ENCODE measurements at regions of chr2 and their contacts with region 1.

Region 1: DNA sequence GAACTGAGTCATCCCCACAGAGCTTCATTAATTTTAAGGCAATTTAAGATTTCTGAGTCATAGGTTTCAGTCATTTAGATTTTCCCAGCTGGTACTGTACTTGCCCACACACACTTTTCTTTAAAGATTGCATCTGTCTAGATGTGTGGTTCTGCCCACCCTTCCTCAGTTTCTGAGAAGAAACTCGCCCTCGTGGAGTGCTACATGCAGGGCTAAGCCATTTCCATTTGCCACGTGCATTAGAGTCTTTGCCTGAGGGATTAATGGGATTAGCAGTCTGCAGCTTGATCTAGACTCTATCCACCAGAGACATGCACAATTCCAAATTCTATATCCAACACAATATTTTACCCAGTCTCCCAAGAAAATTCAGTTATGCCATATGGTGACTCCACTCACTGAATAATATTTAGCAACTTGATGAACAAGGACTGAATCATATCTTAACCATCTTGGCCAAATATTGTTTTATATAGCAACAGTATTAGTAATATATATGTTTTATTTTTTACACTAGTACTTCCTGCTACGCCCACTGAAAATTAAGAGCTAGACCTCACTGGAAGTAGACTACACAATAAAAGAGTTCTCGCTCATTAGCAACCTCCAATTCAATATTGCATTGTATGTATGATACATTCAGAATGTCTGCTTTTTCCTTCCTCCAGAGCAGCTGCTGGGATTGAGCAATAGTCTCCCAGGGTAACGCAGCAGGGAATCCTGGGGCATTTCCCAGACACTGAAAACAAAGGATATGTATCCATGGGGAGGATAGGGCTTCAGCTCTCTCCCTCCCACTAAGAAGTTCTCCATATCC is 14.2 kb upstream of the TRIB2 start:
- DNase-seq: no peak
- H3K4me3 ChIP-seq: no peak overlapping the region
- H3K27ac ChIP-seq: no peak overlapping the region
- H3K4me1 ChIP-seq: no peaks in the 10 kb centered on the region; a peak in 2 of 7 replicates
- H3K27me3 ChIP-seq: no peaks in the 10 kb centered on the region
- CTCF ChIP-seq: no peak
- EP300 ChIP-seq: no peak
- POLR2A ChIP-seq: no peak
- RAD21 ChIP-seq: no peak

Region 2: DNA sequence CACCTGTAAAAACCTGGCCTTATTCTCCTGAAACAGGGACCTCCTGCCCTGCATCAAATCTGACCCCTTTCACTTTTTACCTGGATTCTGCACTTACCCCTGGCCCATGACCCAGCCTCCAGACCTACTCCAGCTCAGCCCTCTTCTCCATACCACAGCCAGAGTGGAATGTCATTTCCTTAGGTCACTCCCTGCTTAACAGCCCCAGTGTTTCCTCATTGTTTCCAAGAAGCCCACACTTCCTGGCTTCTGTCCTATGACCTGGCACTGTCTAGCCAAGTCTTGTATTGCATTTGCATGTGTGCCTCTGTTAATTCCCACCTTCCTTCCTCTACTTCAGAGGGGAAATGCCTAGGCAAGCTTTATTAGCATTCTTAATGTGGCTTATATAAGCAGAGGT is 37.2 kb before region 1 on chr2:
- CTCF ChIA-PET with region 1: no interaction called
- POLR2A ChIA-PET with region 1: no interaction called
- DNase-seq: no peak
- H3K4me3 ChIP-seq: no peak overlapping the region
- H3K27ac ChIP-seq: no peak overlapping the region
- H3K4me1 ChIP-seq: no peaks in the 10 kb centered on the region
- H3K27me3 ChIP-seq: peaks cover 0 to 1% (median 0%) of the 10 kb centered on the region in 4 experiments; a peak in 1 of 7 replicates
- CTCF ChIP-seq: no peak
- EP300 ChIP-seq: no peak
- POLR2A ChIP-seq: no peak
- RAD21 ChIP-seq: no peak

Region 3: GRCh38 chr2:12716282-12717190 is 14.0 kb after region 1 on chr2 and contains the start of gene TRIB2:
- CTCF ChIA-PET with region 1: interaction called, 11 read pairs
- POLR2A ChIA-PET with region 1: interaction called, 3 read pairs
- DNase-seq: peak in 1 of 2 experiments; percentile 79
- H3K4me3 ChIP-seq: peak within 1 kb of the TSS; percentile 74 to 95 (median 83)
- H3K27ac ChIP-seq: peak within 1 kb of the TSS; percentile 70; the same call in 1 of the 2 replicates
- H3K4me1 ChIP-seq: peaks cover 2 to 12% (median 5%) of the 10 kb centered on the region in 4 experiments; a peak in 6 of 7 replicates
- H3K27me3 ChIP-seq: no peaks in the 10 kb centered on the region
- CTCF ChIP-seq: peak in 1 of 3 experiments; percentile 26; a peak in 1 of 4 replicates
- EP300 ChIP-seq: no peak
- POLR2A ChIP-seq: 0 out of 3 replicates have a peak, but pooled peaks of 1 of the 2 experiments have one; percentile 29
- RAD21 ChIP-seq: peak in 1 of 2 experiments; percentile 43; a peak in 1 of 4 replicates
- total RNA-seq, gene TRIB2: 57.0 and 57.3 TPM in 2 replicates

Region 4: GRCh38 chr2:12728221-12728777 is 25.8 kb after region 1 on chr2:
- CTCF ChIA-PET with region 1: no interaction called
- POLR2A ChIA-PET with region 1: no interaction called
- DNase-seq: no peak
- H3K4me3 ChIP-seq: no peak overlapping the region
- H3K27ac ChIP-seq: no peak overlapping the region
- H3K4me1 ChIP-seq: peaks cover 0 to 4% (median 0%) of the 10 kb centered on the region in 4 experiments; a peak in 1 of 7 replicates
- H3K27me3 ChIP-seq: no peaks in the 10 kb centered on the region
- CTCF ChIP-seq: no peak
- EP300 ChIP-seq: no peak
- POLR2A ChIP-seq: no peak
- RAD21 ChIP-seq: no peak

Measured in H1 (cell line).